GM12878 (cell line): ENCODE measurements at regions of chr1 and their contacts with region 1.

Region 1: GRCh38 chr1:51729156-51729823 is 112.4 kb downstream of the OSBPL9 start:
- DNase-seq: peak; percentile 87
- ATAC-seq: peak; percentile 91
- H3K4me3 ChIP-seq: peak overlapping the region; percentile 88
- H3K27ac ChIP-seq: peak overlapping the region; percentile 95
- H3K4me1 ChIP-seq: peaks cover 26% of the 10 kb centered on the region
- H3K27me3 ChIP-seq: no peaks in the 10 kb centered on the region
- CTCF ChIP-seq: no peak
- EP300 ChIP-seq: peak in 1 of 2 experiments; percentile 43; a peak in 2 of 4 replicates
- POLR2A ChIP-seq: peak; percentile 94
- RAD21 ChIP-seq: no peak

Region 2: DNA sequence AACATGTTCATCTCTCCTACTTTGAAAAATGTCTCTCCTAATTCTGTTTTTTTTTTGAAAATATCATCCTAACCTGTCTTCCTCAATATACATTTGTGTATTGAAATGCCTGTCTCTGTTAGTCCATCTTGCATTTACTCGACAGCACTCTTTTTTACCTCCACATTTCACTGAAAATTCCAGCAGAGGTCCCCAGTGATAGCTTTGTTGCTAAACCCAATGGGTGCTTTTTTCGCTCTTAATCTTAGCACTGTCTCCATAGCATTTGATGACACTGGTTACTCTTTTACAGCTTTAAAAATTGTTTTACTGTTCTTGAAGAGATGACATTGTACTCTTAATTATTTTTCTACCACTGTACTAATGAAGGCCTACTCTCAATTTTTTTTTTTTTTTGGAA is 101.6 kb before region 1 on chr1:
- CTCF ChIA-PET with region 1: interaction called, 4 read pairs
- POLR2A ChIA-PET with region 1: no interaction called
- RAD21 ChIA-PET with region 1: interaction called, 4 read pairs
- SMC1A ChIA-PET with region 1: interaction called, 3 read pairs
- in situ Hi-C with region 1: no loop called
- intact Hi-C with region 1: loop called (anchors 10 kb)
- DNase-seq: no peak
- ATAC-seq: peak; percentile 72
- H3K4me3 ChIP-seq: no peak overlapping the region
- H3K27ac ChIP-seq: no peak overlapping the region
- H3K4me1 ChIP-seq: no peaks in the 10 kb centered on the region
- H3K27me3 ChIP-seq: no peaks in the 10 kb centered on the region
- CTCF ChIP-seq: peak; percentile 35 to 55 (median 37); a peak in 4 of 6 replicates
- EP300 ChIP-seq: no peak
- POLR2A ChIP-seq: no peak
- RAD21 ChIP-seq: peak; percentile 80

Region 3: GRCh38 chr1:51679435-51679834 is 49.9 kb before region 1 on chr1:
- CTCF ChIA-PET with region 1: interaction called, 4 read pairs
- POLR2A ChIA-PET with region 1: interaction called, 4 read pairs
- RAD21 ChIA-PET with region 1: interaction called, 7 read pairs
- SMC1A ChIA-PET with region 1: interaction called, 6 read pairs
- in situ Hi-C with region 1: no loop called
- intact Hi-C with region 1: loop called (anchors 5 kb)
- DNase-seq: peak; percentile 21
- ATAC-seq: peak; percentile 87
- H3K4me3 ChIP-seq: no peak overlapping the region
- H3K27ac ChIP-seq: no peak overlapping the region
- H3K4me1 ChIP-seq: peaks cover 13% of the 10 kb centered on the region; the same call in 1 of the 2 replicates
- H3K27me3 ChIP-seq: no peaks in the 10 kb centered on the region
- CTCF ChIP-seq: no peak
- EP300 ChIP-seq: no peak
- POLR2A ChIP-seq: no peak
- RAD21 ChIP-seq: no peak

Region 4: DNA sequence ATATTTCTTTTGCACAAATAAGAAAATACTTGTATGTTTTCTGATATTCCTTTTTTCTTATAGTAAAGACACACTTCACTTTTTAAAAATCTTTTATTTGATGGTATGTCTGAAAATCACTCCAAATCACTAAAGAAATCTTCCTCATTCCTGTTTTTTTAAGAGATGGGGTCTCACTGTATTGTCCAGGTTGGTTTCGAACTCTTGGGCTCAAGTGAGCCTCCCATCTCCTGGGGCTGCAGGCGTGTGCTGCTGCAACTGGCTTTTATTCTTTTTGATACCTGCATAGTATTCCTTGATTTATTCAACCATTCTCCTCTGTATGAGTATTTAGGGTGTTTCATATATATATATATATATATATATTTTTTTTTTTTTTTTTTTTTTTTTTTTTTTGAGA is 24.3 kb before region 1 on chr1:
- CTCF ChIA-PET with region 1: no interaction called
- POLR2A ChIA-PET with region 1: no interaction called
- RAD21 ChIA-PET with region 1: no interaction called
- SMC1A ChIA-PET with region 1: no interaction called
- in situ Hi-C with region 1: no loop called
- intact Hi-C with region 1: no loop called
- DNase-seq: no peak
- ATAC-seq: no peak
- H3K4me3 ChIP-seq: no peak overlapping the region
- H3K27ac ChIP-seq: no peak overlapping the region
- H3K4me1 ChIP-seq: no peaks in the 10 kb centered on the region
- H3K27me3 ChIP-seq: no peaks in the 10 kb centered on the region
- CTCF ChIP-seq: no peak
- EP300 ChIP-seq: no peak
- POLR2A ChIP-seq: no peak
- RAD21 ChIP-seq: no peak

Region 5: DNA sequence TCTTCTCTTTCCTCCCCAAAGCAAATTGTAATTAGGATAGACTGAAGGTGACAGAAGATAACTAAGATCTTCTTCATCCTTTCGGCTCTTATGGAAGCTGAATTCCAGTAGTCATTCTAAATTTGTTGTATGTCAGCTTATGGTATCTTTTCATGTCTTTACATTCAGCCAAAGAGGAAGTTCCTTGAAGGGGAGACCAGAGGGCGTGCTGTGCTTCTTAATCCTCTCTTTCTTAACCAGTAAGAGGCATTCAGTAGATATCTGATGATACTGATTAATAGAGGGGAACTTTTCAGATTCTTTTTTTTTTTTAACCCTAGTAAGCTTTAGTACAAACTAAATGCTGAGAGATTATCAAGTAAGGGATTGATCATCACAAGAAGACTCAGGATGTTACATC is 10.1 kb before region 1 on chr1:
- CTCF ChIA-PET with region 1: interaction called, 7 read pairs
- POLR2A ChIA-PET with region 1: interaction called, 11 read pairs
- RAD21 ChIA-PET with region 1: interaction called, 4 read pairs
- SMC1A ChIA-PET with region 1: interaction called, 154 read pairs
- in situ Hi-C with region 1: no loop called
- intact Hi-C with region 1: no loop called
- DNase-seq: no peak
- ATAC-seq: peak; percentile 38; the same call in 1 of the 3 replicates
- H3K4me3 ChIP-seq: no peak overlapping the region
- H3K27ac ChIP-seq: no peak overlapping the region
- H3K4me1 ChIP-seq: peaks cover 9% of the 10 kb centered on the region; the same call in 1 of the 2 replicates
- H3K27me3 ChIP-seq: no peaks in the 10 kb centered on the region
- CTCF ChIP-seq: peak in 1 of 3 experiments; percentile 17; a peak in 1 of 6 replicates
- EP300 ChIP-seq: no peak
- POLR2A ChIP-seq: no peak
- RAD21 ChIP-seq: peak; percentile 35; the same call in 1 of the 2 replicates

Region 6: DNA sequence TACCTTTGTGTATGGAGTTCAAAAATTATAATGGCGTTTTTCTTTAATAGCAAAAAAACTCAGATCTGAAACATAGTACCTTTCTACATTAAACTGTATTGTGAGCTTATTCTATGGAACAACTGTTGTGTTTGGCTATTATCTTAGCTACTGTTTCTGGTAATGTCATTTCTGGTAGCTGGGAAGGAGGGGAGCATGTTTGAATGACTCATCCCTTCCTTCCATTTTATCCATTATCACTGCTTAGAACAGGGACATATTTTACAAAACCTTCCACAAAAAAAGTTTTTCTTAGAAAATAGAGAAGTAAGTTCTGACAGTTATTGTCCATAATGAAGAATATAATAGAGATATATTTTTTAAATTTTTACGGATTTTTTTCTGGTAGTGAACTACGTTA is 20.9 kb after region 1 on chr1:
- CTCF ChIA-PET with region 1: interaction called, 4 read pairs
- POLR2A ChIA-PET with region 1: interaction called, 4 read pairs
- RAD21 ChIA-PET with region 1: interaction called, 7 read pairs
- SMC1A ChIA-PET with region 1: interaction called, 154 read pairs
- in situ Hi-C with region 1: no loop called
- intact Hi-C with region 1: no loop called
- DNase-seq: no peak
- ATAC-seq: no peak
- H3K4me3 ChIP-seq: no peak overlapping the region
- H3K27ac ChIP-seq: no peak overlapping the region
- H3K4me1 ChIP-seq: no peaks in the 10 kb centered on the region; the same call in 1 of the 2 replicates
- H3K27me3 ChIP-seq: no peaks in the 10 kb centered on the region
- CTCF ChIP-seq: no peak
- EP300 ChIP-seq: no peak
- POLR2A ChIP-seq: no peak
- RAD21 ChIP-seq: no peak

Region 7: GRCh38 chr1:51863384-51863783 is 134.1 kb after region 1 on chr1:
- CTCF ChIA-PET with region 1: no interaction called
- POLR2A ChIA-PET with region 1: interaction called, 10 read pairs
- RAD21 ChIA-PET with region 1: no interaction called
- SMC1A ChIA-PET with region 1: no interaction called
- in situ Hi-C with region 1: no loop called
- intact Hi-C with region 1: no loop called
- DNase-seq: peak; percentile 32
- ATAC-seq: peak; percentile 79
- H3K4me3 ChIP-seq: no peak overlapping the region
- H3K27ac ChIP-seq: peak overlapping the region; percentile 51; the same call in 1 of the 2 replicates
- H3K4me1 ChIP-seq: peaks cover 10% of the 10 kb centered on the region
- H3K27me3 ChIP-seq: no peaks in the 10 kb centered on the region
- CTCF ChIP-seq: no peak
- EP300 ChIP-seq: peak; percentile 46 to 67; a peak in 1 of 4 replicates
- POLR2A ChIP-seq: no peak
- RAD21 ChIP-seq: no peak

Region 8: DNA sequence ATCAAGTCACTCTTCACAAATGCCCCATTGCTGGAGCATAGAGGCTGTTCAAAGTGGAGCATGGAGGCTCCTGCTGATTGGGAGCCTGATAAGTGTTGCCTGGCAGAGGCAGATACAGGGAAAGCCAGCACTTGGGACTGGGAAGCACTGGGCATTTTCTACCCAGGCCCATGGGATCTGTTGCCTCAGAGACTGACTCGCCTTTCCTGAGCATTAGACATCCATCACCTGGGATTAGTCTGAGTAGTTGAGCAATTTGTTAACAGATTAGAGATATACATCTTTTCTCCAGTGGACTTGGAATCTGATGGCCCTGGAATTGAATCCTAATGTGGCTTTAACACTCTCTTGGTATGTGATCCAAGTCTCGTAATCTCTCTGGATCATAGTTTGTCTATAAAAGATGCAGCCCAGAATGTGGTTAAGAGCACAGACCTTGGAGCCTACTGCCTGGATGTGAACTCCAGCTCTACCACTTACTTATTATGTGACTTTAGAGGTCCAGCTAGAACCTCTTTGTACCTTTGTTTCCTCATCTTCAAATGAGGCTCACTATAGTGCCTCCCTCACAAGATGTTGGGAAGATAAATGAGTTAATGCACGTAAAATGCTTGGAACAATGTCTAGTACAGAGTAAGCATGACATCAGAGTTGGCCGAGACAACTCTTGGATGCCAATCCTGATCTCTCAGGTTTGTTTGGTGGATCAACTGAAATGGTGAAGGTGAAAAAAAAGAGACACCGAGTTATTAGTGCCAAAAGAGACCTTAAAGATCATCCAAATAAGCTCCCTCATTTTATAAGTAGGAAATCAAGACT is 187.5 kb after region 1 on chr1:
- CTCF ChIA-PET with region 1: no interaction called
- POLR2A ChIA-PET with region 1: no interaction called
- RAD21 ChIA-PET with region 1: no interaction called
- SMC1A ChIA-PET with region 1: no interaction called
- in situ Hi-C with region 1: no loop called
- intact Hi-C with region 1: no loop called
- DNase-seq: no peak
- ATAC-seq: no peak
- H3K4me3 ChIP-seq: no peak overlapping the region
- H3K27ac ChIP-seq: no peak overlapping the region
- H3K4me1 ChIP-seq: no peaks in the 10 kb centered on the region
- H3K27me3 ChIP-seq: no peaks in the 10 kb centered on the region
- CTCF ChIP-seq: no peak
- EP300 ChIP-seq: no peak
- POLR2A ChIP-seq: no peak
- RAD21 ChIP-seq: no peak